Body of pancreas (tissue), 4 donors: ENCODE measurements at regions of chr7 and their contacts with region 1.

Region 1: DNA sequence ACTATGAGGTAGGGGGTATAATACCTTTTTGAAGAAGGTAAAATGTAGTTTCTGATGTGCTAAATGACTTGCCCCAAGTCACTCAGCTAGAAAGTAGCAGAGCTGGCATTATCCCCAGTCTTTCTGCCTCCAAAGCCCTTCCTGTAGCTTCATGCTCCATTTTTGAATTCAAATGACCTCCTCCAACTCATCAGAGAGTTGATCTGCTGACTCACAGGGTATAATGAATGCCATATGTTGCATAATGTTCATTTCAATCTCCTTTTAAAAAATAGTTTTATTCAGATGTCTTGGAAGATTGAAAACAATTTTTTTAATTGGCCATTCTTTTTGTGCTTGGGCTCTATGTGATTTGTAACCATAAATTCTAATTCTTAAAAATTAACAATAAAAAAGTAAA is 272.8 kb upstream of the IMMP2L start:
- DNase-seq: no peak
- ATAC-seq: no peak
- H3K4me3 ChIP-seq: no peak overlapping the region
- H3K27ac ChIP-seq: no peak overlapping the region
- H3K4me1 ChIP-seq: no peaks in the 10 kb centered on the region
- H3K27me3 ChIP-seq: no peaks in the 10 kb centered on the region
- CTCF ChIP-seq: no peak
- POLR2A ChIP-seq: no peak

Region 2: DNA sequence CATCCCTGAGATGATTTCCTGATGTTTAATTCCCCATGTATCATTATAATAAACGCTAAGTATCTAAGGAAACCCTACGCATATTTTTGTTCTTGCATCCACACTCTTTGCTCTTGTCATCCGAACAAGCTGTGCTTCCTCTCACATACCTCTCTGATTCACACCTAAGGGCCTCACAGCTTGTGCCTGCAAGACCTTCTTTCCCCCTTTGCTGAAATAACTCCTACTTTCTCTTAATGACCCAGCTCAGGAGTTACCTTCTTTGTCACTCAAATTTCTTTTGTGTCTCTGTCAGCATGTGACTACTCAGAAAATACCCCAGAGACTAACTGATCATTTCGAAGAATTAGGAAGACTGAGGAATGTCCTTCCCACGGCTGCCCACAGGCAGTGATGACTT is 63.4 kb before region 1 on chr7:
- intact Hi-C with region 1: loop called (anchors 10 kb)
- DNase-seq: no peak
- ATAC-seq: no peak
- H3K4me3 ChIP-seq: no peak overlapping the region
- H3K27ac ChIP-seq: no peak overlapping the region
- H3K4me1 ChIP-seq: no peaks in the 10 kb centered on the region
- H3K27me3 ChIP-seq: no peaks in the 10 kb centered on the region
- CTCF ChIP-seq: no peak
- POLR2A ChIP-seq: no peak

Region 3: GRCh38 chr7:112789817-112790585 is 954.9 kb after region 1 on chr7 and contains the start of gene TMEM168:
- intact Hi-C with region 1: no loop called
- DNase-seq: peak; percentile 60 to 87 (median 72)
- ATAC-seq: peak; percentile 89
- H3K4me3 ChIP-seq: peak within 1 kb of the TSS; percentile 4 to 56
- H3K27ac ChIP-seq: peak within 1 kb of the TSS; percentile 46 to 85 (median 82)
- H3K4me1 ChIP-seq: peaks cover 13% of the 10 kb centered on the region
- H3K27me3 ChIP-seq: no peaks in the 10 kb centered on the region
- CTCF ChIP-seq: peak in 1 of 7 experiments; percentile 3
- POLR2A ChIP-seq: peak in 2 of 3 donors; percentile 71 to 78
- total RNA-seq, gene TMEM168: 13.7 to 15.8 TPM